ENCODE measurements at regions of chr1 and their contacts with region 1.

Region 1: GRCh38 chr1:110674337-110675059 is at the start of gene KCNA3:
- DNase-seq: peak; percentile 58
- H3K4me3 Mint-ChIP-seq: peak within 1 kb of the TSS; percentile 96
- H3K27ac Mint-ChIP-seq: peak within 1 kb of the TSS; percentile 92
- H3K4me1 Mint-ChIP-seq: peaks cover 24% of the 10 kb centered on the region
- H3K27me3 Mint-ChIP-seq: no peaks in the 10 kb centered on the region
- total RNA-seq, gene KCNA3: 15.3 to 15.4 TPM

Region 2: GRCh38 chr1:109357616-109358015 is 1316.9 kb before region 1 on chr1:
- CTCF ChIA-PET with region 1: no interaction called
- intact Hi-C with region 1: no loop called
- DNase-seq: no peak
- H3K4me3 Mint-ChIP-seq: no peak overlapping the region
- H3K27ac Mint-ChIP-seq: no peak overlapping the region
- H3K4me1 Mint-ChIP-seq: peaks cover 4% of the 10 kb centered on the region
- H3K27me3 Mint-ChIP-seq: peaks cover 2% of the 10 kb centered on the region

Region 3: DNA sequence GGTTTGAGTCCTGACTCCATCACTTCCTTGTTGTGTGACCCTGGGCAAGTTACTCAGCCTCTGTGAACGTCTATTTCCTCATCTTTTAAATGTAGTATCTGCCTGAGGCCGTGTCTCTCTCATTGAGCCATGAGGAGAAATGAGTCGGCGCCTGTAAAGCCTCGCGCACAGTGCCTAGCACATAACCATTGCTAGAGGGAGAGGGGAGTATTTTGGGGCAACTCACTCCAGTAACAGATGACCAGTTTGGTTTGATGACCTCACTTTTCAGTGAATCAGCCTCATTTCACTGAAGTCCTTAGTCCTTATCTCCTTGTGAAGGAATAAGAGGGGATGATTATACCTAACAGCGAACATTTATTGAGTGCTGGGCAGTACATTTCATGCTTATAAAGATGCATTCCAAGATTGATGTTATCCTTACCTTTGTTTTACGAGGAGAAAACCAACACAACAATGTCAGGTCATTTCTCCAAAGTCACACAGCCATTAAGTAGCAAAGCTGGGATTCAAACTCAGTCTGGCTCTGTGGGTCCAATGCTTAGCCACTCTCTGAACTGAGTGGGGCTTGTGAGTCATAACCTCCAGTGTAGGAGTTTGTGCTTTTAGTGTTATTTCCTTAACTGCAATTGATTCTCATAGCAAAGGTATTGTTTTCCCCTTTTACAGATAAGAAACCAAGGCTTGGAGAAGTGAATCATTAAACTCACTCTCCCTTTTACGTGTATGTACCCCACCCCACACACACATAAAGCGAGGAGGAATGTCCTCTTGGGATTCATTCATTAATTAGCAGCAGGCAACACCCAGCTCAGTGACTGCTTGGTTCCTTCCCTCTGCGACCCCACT is 438.4 kb before region 1 on chr1:
- CTCF ChIA-PET with region 1: no interaction called
- intact Hi-C with region 1: loop called (anchors 1 kb)
- DNase-seq: peak; percentile 84
- H3K4me3 Mint-ChIP-seq: no peak overlapping the region
- H3K27ac Mint-ChIP-seq: peak overlapping the region; percentile 89
- H3K4me1 Mint-ChIP-seq: peaks cover 55% of the 10 kb centered on the region
- H3K27me3 Mint-ChIP-seq: no peaks in the 10 kb centered on the region

Region 4: DNA sequence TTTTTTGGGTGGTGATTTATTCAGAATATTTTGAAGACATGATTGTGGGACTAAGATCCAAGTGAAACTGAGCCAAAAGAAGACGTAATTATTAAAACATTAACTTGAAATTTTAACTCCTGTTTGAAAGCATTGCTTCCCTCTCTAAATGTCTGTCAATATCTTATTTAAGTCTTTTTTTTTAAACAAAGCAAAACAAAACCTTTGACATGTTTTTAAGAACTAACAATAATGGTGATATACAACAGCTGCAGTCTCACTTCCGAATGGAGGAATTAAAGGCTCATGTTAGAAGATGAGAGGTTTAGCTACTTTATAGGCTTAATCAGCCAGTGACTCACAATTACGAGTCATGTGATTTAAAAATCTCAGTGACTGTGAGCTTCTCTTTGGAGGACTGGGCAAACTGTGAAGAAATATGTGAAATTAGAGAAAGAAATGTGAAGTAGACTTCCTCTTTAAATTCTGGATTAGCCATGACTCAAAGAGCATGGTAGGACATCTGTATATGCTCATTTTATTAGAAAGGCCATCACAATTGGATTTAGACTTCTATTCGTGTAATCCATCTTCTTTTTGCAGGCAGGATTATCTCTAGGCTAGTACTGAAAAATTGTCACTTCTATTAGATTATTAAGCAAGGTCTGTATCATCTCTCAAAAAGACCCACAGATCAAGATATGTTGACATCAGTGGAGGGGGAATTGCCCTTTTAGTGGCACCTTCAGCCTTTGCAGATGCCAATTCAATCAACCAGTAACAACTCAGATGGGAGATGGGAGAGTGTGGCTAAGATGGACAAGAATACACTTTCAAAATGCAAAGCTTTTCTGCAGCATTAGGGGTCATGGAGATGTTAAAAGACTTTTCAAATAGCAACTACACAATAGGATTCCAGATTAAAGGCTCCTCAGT is 28.4 kb before region 1 on chr1:
- CTCF ChIA-PET with region 1: interaction called, 24 read pairs
- intact Hi-C with region 1: loop called (anchors 1 kb)
- DNase-seq: no peak
- H3K4me3 Mint-ChIP-seq: peak overlapping the region; percentile 28
- H3K27ac Mint-ChIP-seq: no peak overlapping the region
- H3K4me1 Mint-ChIP-seq: peaks cover 55% of the 10 kb centered on the region
- H3K27me3 Mint-ChIP-seq: no peaks in the 10 kb centered on the region

Region 5: GRCh38 chr1:110766025-110766647 is 91.6 kb after region 1 on chr1:
- CTCF ChIA-PET with region 1: interaction called, 43 read pairs
- intact Hi-C with region 1: loop called (anchors 1 kb)
- DNase-seq: peak; percentile 75
- H3K4me3 Mint-ChIP-seq: no peak overlapping the region
- H3K27ac Mint-ChIP-seq: no peak overlapping the region
- H3K4me1 Mint-ChIP-seq: peaks cover 2% of the 10 kb centered on the region
- H3K27me3 Mint-ChIP-seq: peaks cover 2% of the 10 kb centered on the region

Region 6: DNA sequence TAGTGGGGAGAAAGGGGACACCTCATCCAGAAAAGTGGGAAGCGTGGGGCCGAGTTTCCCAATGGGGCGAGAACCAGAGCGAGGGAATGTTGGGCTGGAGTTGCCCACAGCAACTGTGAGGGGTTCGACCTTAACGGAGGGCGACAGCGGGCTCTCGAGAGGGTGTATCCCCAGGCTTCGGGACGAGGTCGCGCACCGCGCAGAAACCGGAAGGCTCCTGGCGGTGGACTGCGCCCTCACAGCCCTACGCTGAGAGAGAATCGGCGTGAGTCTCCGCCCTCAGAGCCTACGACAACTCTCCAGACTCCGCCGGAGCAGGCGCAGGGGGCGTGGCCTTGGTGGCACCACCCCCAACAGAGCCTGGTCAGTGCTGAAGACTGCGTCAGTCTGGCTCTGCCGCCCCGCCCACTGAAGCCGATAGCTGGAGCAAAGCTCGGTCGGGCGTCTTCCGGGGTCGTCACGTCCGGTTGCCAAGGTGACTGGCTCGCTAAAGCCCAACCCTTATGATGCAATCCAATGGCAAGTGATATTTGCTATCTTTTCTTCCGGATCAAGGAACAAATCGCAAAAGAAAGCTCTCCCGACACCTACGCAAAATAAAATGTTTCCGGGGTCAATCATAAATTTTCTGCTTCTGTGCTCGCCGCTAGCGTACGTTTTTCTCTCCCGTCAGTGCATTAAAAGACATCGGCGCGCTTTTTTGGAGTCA is 289.3 kb after region 1 on chr1 and contains the start of gene LRIF1:
- CTCF ChIA-PET with region 1: no interaction called
- intact Hi-C with region 1: loop called (anchors 2 kb)
- DNase-seq: peak; percentile 100
- H3K4me3 Mint-ChIP-seq: peak within 1 kb of the TSS; percentile 83
- H3K27ac Mint-ChIP-seq: peak within 1 kb of the TSS; percentile 96
- H3K4me1 Mint-ChIP-seq: peaks cover 34% of the 10 kb centered on the region
- H3K27me3 Mint-ChIP-seq: peaks cover 8% of the 10 kb centered on the region
- total RNA-seq, gene LRIF1: 12.0 to 12.3 TPM

Region 7: GRCh38 chr1:111203681-111204200 is 529.2 kb after region 1 on chr1:
- CTCF ChIA-PET with region 1: no interaction called
- intact Hi-C with region 1: loop called (anchors 5 kb)
- DNase-seq: peak; percentile 94
- H3K4me3 Mint-ChIP-seq: peak overlapping the region; percentile 98
- H3K27ac Mint-ChIP-seq: peak overlapping the region; percentile 99
- H3K4me1 Mint-ChIP-seq: peaks cover 44% of the 10 kb centered on the region
- H3K27me3 Mint-ChIP-seq: no peaks in the 10 kb centered on the region

Region 8: GRCh38 chr1:111448918-111449702 is 774.6 kb after region 1 on chr1 and contains the starts of genes ATP5PB and WDR77:
- CTCF ChIA-PET with region 1: no interaction called
- intact Hi-C with region 1: loop called (anchors 10 kb)
- DNase-seq: peak; percentile 96
- H3K4me3 Mint-ChIP-seq: peak within 1 kb of the TSS; percentile 100
- H3K27ac Mint-ChIP-seq: peak within 1 kb of the TSS; percentile 96
- H3K4me1 Mint-ChIP-seq: peaks cover 71% of the 10 kb centered on the region
- H3K27me3 Mint-ChIP-seq: no peaks in the 10 kb centered on the region
- total RNA-seq, gene ATP5PB: 324 to 331 TPM
- total RNA-seq, gene WDR77: 43.1 to 48.8 TPM

Region 9: GRCh38 chr1:112177314-112177713 is 1502.8 kb after region 1 on chr1:
- CTCF ChIA-PET with region 1: no interaction called
- intact Hi-C with region 1: no loop called
- DNase-seq: no peak
- H3K4me3 Mint-ChIP-seq: no peak overlapping the region
- H3K27ac Mint-ChIP-seq: no peak overlapping the region
- H3K4me1 Mint-ChIP-seq: no peaks in the 10 kb centered on the region
- H3K27me3 Mint-ChIP-seq: peaks cover 8% of the 10 kb centered on the region